Posterior vena cava (tissue), 2 donors: ENCODE measurements at regions of chr20 and their contacts with region 1.

Region 1: GRCh38 chr20:54734693-54735092 is 259.3 kb downstream of the DOK5 start:
- DNase-seq: no peak

Region 2: DNA sequence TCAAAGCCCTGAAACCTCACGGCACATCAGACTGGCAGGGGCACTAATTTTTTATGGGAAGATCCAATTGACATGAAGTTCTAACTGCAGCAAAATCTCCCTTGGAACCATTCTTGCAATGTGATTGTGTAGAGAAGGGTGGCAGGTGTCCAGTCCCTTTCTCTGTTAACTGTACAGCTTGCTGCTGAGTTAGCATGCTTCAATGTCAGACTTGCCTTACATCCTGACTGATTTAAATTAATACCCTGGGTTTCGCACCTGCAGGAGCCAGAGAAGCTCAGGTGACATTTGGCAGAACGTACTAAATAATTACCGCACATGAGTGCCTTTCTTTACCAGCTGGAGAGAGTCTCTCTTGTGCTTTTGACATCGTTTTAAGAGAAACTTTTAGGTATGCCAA is 136.3 kb before region 1 on chr20:
- intact Hi-C with region 1: no loop called
- DNase-seq: no peak

Region 3: GRCh38 chr20:54692168-54692887 is 42.4 kb before region 1 on chr20:
- intact Hi-C with region 1: no loop called
- DNase-seq: no peak

Region 4: GRCh38 chr20:55057779-55058415 is 323.2 kb after region 1 on chr20:
- intact Hi-C with region 1: loop called in 1 of 2 experiments (anchors 5 kb)
- DNase-seq: no peak